ENCODE measurements at regions of chrX and their contacts with region 1.

Region 1: DNA sequence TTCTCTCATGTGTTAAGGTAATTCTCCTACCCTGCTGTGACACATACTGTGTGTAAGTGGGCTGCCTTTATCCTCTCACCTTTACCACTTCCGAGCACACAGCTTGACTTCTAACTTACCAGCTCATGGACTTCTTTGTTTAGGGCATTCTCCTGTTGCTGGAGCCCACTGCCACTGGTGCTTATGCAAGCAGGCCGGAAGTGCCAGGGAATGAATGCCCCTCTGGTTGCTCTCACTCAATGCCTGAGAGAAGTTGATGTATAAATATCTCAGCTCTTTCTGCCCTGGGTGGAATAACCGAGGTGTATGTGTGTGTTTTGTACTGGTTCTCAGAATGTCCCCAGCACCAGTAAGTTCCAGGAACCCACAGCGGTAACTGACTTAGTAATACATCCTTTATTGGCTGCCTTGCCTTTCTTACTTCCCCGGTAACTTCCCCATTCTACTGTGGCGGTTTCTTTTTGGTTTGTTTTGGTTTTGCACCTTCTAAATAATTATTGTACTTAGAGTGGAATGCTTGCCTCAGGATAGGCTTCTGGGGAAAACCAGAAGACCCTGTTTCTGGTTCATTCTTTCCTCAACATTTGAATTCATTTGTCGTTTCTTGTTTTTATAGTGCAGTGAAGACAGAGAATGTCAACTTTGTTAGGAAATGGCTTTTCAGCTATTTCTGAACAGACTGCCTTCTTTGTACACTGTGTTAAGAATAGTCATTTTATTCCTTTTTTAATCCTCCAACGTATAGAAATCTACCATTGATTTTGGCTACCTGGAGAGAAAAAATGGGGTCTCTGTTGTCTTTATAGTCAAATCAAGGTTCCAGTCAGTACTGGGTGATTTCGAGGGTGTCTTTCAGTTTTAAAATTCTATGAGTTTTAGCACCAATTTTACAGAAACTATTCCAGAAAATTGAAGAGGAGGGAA is 45.4 kb downstream of the CXorf58 start:
- DNase-seq: peak; percentile 83
- H3K4me3 Mint-ChIP-seq: peak overlapping the region; percentile 89
- H3K27ac Mint-ChIP-seq: peak overlapping the region; percentile 97
- H3K4me1 Mint-ChIP-seq: peaks cover 12% of the 10 kb centered on the region
- H3K27me3 Mint-ChIP-seq: no peaks in the 10 kb centered on the region

Region 2: DNA sequence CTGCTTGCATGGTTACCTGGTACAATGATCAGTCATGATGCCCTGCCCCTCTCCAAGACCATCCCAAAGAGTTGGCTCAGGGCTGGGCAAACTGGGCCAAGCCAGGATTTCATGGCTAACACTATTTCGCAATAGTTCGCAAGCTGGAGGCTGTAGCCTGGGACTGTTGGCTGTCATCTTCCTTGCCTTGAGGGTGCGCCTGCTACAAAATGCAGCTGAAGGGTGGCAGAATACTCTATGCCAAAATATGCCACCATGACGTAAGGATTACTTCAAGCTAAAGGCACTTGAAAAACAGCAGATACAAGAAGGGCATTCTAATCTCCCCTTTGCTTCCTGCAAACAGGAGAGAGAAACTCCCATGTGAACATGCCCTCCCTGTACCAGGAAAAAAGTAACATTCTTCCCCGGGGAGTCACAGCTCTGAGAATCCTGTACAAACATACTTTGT is 149.3 kb before region 1 on chrX:
- intact Hi-C with region 1: no loop called
- DNase-seq: no peak
- H3K4me3 Mint-ChIP-seq: no peak overlapping the region
- H3K27ac Mint-ChIP-seq: no peak overlapping the region
- H3K4me1 Mint-ChIP-seq: peaks cover 5% of the 10 kb centered on the region
- H3K27me3 Mint-ChIP-seq: no peaks in the 10 kb centered on the region

Region 3: GRCh38 chrX:23907498-23908218 is 45.6 kb before region 1 on chrX and contains the starts of genes APOO and CXorf58:
- intact Hi-C with region 1: loop called (anchors 1 kb)
- DNase-seq: peak; percentile 97
- H3K4me3 Mint-ChIP-seq: peak within 1 kb of the TSS; percentile 82
- H3K27ac Mint-ChIP-seq: peak within 1 kb of the TSS; percentile 88
- H3K4me1 Mint-ChIP-seq: peaks cover 17% of the 10 kb centered on the region
- H3K27me3 Mint-ChIP-seq: no peaks in the 10 kb centered on the region
- total RNA-seq, gene APOO: 27.1 and 33.7 TPM in 2 replicates
- total RNA-seq, gene CXorf58: not detected in 2 replicates

Region 4: DNA sequence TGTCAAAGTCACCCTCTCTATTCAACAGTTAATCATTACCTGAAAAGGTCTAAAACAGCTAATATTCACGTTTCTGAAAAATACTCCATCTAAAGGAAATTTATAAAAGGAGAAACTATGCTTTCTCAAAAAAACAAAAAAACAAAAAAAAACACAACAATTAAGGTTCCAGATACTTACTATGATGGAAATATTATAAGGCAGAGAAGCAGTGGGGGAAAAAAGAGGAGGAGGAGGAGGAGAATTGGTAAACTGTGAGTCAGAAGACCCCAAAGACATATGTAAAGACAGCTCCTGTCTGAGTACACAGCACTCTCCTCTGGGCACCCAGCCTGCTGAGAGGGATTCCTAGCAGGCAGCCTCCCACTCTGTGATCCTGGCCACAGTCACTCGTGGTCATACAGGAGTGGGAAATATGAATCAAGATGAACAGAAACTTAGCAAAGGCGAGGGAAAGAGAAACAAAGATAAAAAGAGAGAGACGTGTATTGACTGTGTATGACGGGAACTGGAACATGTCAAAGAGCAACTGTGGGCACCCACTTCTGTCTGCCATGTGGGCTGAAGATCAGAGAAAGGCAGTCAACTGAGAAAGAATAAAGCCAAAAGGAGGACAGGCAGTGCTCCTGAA is 61.3 kb after region 1 on chrX:
- intact Hi-C with region 1: loop called (anchors 1 kb)
- DNase-seq: peak; percentile 72
- H3K4me3 Mint-ChIP-seq: peak overlapping the region; percentile 69
- H3K27ac Mint-ChIP-seq: peak overlapping the region; percentile 86
- H3K4me1 Mint-ChIP-seq: peaks cover 32% of the 10 kb centered on the region
- H3K27me3 Mint-ChIP-seq: no peaks in the 10 kb centered on the region